ENCODE measurements at regions of chr12 and their contacts with region 1.

Region 1: DNA sequence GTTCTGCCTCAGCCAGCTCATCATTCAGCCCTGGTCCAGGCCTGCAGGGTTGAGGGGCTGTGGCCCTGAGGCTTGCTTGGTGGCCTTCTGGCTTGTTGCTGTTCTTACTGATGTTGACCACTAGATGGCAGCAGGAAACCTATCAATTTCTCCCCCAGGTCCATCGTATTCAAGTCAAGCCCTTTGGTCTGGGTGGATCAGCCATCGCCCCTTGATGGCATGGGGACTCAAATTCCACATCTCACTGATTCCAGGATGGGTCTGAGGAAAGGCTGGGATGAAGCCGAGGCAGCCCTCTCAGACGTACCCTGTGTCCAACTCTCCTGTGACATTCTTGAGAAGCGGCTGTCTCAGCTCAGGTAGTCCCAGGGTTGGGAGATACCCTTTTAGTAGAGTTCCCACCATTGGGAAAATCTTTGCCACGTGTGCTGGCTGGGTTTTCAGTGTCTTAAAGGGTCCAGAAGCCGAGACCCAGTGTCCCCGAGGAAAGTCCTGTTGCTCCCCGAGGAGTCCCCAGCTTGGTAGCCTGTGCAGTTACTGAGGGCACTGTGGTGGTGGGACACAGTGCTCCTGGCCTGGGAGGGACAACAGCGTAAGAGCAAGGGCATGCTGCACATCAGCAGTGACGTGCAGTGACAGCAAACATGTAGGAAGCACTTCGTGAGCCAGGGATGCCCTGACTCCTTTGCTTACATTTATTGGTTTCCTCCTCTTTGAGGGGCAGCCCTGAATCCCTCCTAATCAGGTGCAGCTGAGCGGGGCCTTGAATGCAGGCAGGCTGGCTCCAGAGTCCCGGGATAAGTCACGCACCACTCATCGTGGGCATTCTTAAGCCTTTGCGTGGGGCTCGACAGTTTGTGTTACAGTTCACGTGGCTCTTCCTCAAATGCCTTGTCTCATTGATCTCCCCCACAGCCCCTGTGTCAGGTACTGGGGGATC is 58.6 kb downstream of the TSPAN9 start:
- DNase-seq: peak in 1 of 2 donors; percentile 40
- H3K4me3 ChIP-seq: no peak overlapping the region
- H3K27ac ChIP-seq: no peak overlapping the region
- H3K4me1 ChIP-seq: peaks cover 0 to 62% (median 31%) of the 10 kb centered on the region in 4 donors
- H3K27me3 ChIP-seq: no peaks in the 10 kb centered on the region
- CTCF ChIP-seq: peak; percentile 76 to 91

Region 2: DNA sequence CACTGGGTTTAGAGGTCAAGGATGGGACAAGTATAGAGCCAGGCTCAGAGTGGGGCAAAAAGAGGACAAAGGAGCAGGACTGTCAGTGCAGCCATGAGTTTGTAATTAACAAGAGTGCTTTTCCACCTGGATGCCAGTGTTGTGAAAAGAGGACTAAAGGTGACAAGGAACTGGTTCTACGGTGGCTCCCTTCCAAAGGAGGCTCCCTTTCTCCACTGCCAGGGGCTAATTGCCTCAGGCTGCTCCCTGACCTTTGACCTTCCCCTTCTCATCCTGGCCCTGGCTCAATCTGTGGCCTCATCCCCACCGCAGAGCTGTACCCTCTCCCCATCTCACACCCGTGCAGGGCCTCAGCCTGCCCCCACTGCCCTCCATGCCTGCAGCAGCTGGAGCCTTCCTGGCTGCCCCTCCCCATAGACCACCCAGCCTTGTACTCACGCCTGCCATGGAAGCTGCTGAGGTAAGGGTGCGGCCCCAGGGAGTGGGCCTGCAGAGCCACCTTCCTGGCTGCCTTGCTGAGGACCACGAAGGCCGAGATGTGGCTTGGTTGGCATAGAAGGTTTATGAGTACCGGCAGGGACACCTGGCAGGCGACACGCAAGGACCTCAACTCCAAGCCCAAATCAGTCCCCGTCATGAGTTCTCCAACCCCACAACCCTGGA is 365.8 kb before region 1 on chr12:
- intact Hi-C with region 1: no loop called
- DNase-seq: no peak
- H3K4me3 ChIP-seq: no peak overlapping the region
- H3K27ac ChIP-seq: no peak overlapping the region
- H3K4me1 ChIP-seq: no peaks in the 10 kb centered on the region
- H3K27me3 ChIP-seq: no peaks in the 10 kb centered on the region
- CTCF ChIP-seq: no peak

Region 3: DNA sequence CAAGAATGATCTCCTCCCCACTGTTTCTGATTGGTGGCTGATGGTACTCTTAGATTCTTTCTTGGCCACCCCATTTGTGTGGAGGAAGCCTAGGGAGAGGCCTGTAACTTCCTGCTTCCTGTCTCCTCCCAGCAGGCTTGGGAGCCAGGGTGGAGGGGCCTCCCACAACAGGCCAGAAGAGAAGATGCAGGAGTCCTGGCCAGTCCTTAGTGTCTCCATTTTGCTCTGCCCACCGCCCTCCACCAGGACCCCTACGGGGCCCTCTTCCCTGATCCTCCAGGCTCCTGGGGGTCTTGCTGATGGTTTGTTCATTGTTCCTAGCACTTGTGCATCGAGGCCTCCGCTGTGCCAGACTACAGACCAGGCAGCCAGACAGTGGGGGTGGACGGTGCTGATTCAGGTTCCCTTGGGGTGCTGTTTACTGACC is 51.9 kb before region 1 on chr12:
- intact Hi-C with region 1: no loop called
- DNase-seq: no peak
- H3K4me3 ChIP-seq: no peak overlapping the region
- H3K27ac ChIP-seq: no peak overlapping the region
- H3K4me1 ChIP-seq: peaks cover 0 to 8% (median 3%) of the 10 kb centered on the region in 4 donors
- H3K27me3 ChIP-seq: no peaks in the 10 kb centered on the region
- CTCF ChIP-seq: no peak

Region 4: DNA sequence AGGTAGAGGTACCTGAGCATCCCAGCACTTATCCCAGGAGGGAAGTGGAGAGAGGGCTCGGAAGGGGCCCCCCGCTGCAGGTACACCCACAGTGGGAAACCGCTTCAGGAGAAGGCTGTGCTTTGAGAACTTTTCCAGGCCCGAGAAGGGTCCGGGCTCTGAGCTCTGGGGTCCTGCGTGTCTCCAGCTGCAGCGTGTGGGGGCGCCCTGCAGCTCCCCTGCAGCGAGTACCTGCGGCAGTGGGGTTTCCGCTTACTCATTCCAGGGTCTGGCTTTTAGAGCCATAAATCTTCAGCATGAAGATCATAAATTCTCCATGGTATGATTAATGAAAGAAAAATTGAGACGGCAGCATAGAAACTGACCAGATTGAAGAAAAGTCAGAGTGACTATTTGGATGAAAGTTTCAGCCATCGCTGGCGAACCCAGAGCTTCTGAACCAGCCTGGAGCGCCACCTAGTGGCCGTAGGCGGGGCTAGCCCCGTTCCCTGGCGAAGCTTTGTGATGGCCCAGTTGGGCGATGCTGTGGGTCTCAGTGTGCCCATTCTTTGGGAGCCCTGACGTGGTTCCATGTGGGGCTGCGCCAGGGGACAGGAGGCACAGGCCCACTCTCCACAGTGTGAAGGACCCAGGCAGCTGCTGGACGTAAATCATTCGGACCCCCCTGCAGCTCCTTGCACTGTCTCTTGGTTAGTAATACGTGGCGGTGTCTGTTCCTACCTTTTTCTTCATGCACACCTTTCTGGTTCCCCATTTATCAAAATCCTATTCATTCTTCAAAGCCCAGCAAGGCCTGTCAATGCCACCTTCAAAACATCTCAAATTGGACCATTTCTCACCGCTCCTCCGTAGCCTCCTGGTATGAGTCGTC is 139.6 kb after region 1 on chr12:
- intact Hi-C with region 1: loop called (anchors 2 kb)
- DNase-seq: peak; percentile 78 to 84
- H3K4me3 ChIP-seq: no peak overlapping the region
- H3K27ac ChIP-seq: no peak overlapping the region
- H3K4me1 ChIP-seq: peaks cover 0 to 19% (median 16%) of the 10 kb centered on the region in 4 donors
- H3K27me3 ChIP-seq: no peaks in the 10 kb centered on the region
- CTCF ChIP-seq: peak; percentile 96 to 98

Measured in tibial artery (tissue), 4 donors.